ENCODE measurements at regions of chr11 and their contacts with region 1.

Region 1: GRCh38 chr11:44143943-44144909 is 48.7 kb downstream of the EXT2 start:
- DNase-seq: no peak
- ATAC-seq: no peak

Region 2: GRCh38 chr11:44235765-44236201 is 91.6 kb after region 1 on chr11:
- intact Hi-C with region 1: loop called (anchors 10 kb)
- DNase-seq: no peak
- ATAC-seq: peak; percentile 74

Measured in Right ventricle myocardium superior (tissue), 1 donor.